MCF 10A (cell line): ENCODE measurements at regions of chr17 and their contacts with region 1.

Region 1: GRCh38 chr17:45584092-45585036 is 93.8 kb upstream of the PLEKHM1 start:
- DNase-seq: peak; percentile 81
- H3K4me3 Mint-ChIP-seq: peak overlapping the region; percentile 77
- H3K27ac Mint-ChIP-seq: peak overlapping the region; percentile 76
- H3K4me1 Mint-ChIP-seq: peaks cover 23% of the 10 kb centered on the region
- H3K27me3 Mint-ChIP-seq: no peaks in the 10 kb centered on the region
- CTCF ChIP-seq: no peak

Region 2: DNA sequence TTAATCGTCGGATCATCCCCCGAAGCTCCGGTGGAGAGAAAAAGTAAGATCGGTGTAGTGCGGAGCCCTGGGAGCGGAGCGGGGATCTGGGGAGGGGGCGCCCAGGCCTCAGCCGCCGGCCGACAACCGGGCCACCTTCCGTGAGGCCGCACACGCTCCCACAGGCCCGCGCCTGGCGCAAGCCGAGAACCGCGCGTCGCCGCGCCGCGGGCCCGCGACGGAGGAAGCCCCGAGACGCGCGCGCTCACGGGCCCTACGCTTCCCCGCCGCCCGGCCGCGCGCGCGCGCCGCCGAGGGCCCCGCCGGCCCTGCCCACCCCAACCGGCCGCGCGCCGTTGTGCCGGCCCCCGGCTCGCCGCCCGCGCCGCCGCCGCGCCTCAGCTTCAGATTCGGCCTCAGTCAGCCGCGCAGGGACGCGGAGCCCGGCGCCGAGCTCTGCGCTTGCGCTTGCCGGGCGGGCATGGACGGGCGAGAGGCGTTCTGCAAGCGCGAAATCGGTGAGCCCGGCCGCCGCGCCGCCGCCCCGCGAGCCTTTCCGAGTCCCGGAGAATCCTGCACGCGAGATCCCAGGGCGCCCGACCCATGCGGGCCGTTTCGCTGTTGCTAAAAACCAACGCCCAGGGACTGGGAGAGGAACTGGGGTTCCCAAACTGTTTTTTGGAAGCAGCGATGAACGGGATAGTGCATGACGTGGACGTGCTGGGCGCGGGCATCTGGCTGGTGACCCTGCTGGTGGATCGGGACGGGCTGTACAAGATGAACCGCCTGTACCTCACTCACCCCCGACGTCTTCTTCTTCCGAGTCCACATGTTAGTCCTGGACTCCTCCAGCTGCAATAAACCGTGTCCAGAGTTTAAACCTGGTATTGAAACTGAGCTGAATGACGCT is 682.5 kb after region 1 on chr17:
- CTCF ChIA-PET with region 1: no interaction called
- POLR2A ChIA-PET with region 1: interaction called, 11 read pairs
- intact Hi-C with region 1: no loop called
- DNase-seq: peak; percentile 88
- H3K4me3 Mint-ChIP-seq: peak overlapping the region; percentile 90
- H3K27ac Mint-ChIP-seq: peak overlapping the region; percentile 84
- H3K4me1 Mint-ChIP-seq: peaks cover 24% of the 10 kb centered on the region
- H3K27me3 Mint-ChIP-seq: peaks cover 10% of the 10 kb centered on the region
- CTCF ChIP-seq: no peak